Posterior cingulate gyrus (tissue), 11 donors: ENCODE measurements at regions of chr22 and their contacts with region 1.

Region 1: GRCh38 chr22:43273902-43274484 is 69.2 kb downstream of the SCUBE1 start:
- DNase-seq: peak in 4 of 10 donors; percentile 27 to 48 (median 36)

Region 2: GRCh38 chr22:43346521-43346929 is 72.5 kb after region 1 on chr22:
- intact Hi-C with region 1: loop called (anchors 1 kb)
- DNase-seq: peak in 6 of 10 donors; percentile 15 to 90 (median 44)

Region 3: GRCh38 chr22:43592476-43592875 is 318.5 kb after region 1 on chr22:
- intact Hi-C with region 1: no loop called
- DNase-seq: peak in 7 of 10 donors; percentile 24 to 84 (median 34)